ENCODE measurements at regions of chr10 and their contacts with region 1.

Region 1: GRCh38 chr10:71378336-71379117 is 18.2 kb upstream of the CDH23 start:
- DNase-seq: no peak
- H3K4me3 ChIP-seq: no peak overlapping the region
- H3K27ac ChIP-seq: peak overlapping the region in 1 of 2 donors; percentile 93
- H3K4me1 ChIP-seq: peaks cover 4% of the 10 kb centered on the region
- H3K27me3 ChIP-seq: no peaks in the 10 kb centered on the region
- CTCF ChIP-seq: no peak
- EP300 ChIP-seq: no peak
- POLR2A ChIP-seq: no peak

Region 2: DNA sequence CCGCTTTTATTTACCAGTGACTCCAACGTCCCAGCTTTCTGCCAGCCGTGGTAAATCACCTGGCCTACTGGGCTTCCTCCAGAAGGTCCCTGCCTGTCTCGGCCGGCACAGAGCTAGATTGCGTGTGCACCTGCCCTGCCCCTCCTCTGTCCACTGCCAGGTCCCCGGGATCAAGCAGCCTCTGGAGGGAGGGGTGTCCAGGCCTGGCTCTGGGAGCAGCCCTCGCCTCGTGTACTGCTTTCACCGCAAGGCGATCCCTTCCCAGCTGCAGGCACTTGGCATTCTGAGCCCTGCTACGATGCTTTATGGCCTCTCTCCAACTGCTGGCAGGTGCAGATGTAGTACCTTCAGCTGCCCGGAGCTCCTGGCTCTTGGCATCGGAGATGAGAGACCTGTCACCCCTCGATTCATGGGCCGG is 52.1 kb before region 1 on chr10:
- intact Hi-C with region 1: loop called in 2 of 4 experiments (anchors 5 to 10 kb)
- DNase-seq: no peak
- H3K4me3 ChIP-seq: no peak overlapping the region
- H3K27ac ChIP-seq: no peak overlapping the region
- H3K4me1 ChIP-seq: no peaks in the 10 kb centered on the region
- H3K27me3 ChIP-seq: no peaks in the 10 kb centered on the region
- CTCF ChIP-seq: no peak
- EP300 ChIP-seq: no peak
- POLR2A ChIP-seq: no peak